Caco-2 (cell line): ENCODE measurements at regions of chr10 and their contacts with region 1.

Region 1: GRCh38 chr10:102815790-102816549 is 21.2 kb downstream of the CYP17A1 start:
- DNase-seq: no peak
- H3K4me3 ChIP-seq: no peak overlapping the region
- H3K4me3 Mint-ChIP-seq: no peak overlapping the region
- H3K27ac Mint-ChIP-seq: no peak overlapping the region
- H3K4me1 ChIP-seq: peaks cover 21% of the 10 kb centered on the region
- H3K4me1 Mint-ChIP-seq: peaks cover 7% of the 10 kb centered on the region
- H3K27me3 ChIP-seq: no peaks in the 10 kb centered on the region
- H3K27me3 Mint-ChIP-seq: no peaks in the 10 kb centered on the region
- CTCF ChIP-seq: no peak

Region 2: GRCh38 chr10:102752934-102753664 is 62.9 kb before region 1 on chr10:
- CTCF ChIA-PET with region 1: interaction called, 8 read pairs
- POLR2A ChIA-PET with region 1: no interaction called
- intact Hi-C with region 1: loop called (anchors 1 kb)
- DNase-seq: peak in 1 of 2 experiments; percentile 55
- H3K4me3 ChIP-seq: no peak overlapping the region
- H3K4me3 Mint-ChIP-seq: no peak overlapping the region
- H3K27ac Mint-ChIP-seq: no peak overlapping the region
- H3K4me1 ChIP-seq: peaks cover 17% of the 10 kb centered on the region
- H3K4me1 Mint-ChIP-seq: peaks cover 11% of the 10 kb centered on the region
- H3K27me3 ChIP-seq: no peaks in the 10 kb centered on the region
- H3K27me3 Mint-ChIP-seq: no peaks in the 10 kb centered on the region
- CTCF ChIP-seq: peak; percentile 66 to 70

Region 3: DNA sequence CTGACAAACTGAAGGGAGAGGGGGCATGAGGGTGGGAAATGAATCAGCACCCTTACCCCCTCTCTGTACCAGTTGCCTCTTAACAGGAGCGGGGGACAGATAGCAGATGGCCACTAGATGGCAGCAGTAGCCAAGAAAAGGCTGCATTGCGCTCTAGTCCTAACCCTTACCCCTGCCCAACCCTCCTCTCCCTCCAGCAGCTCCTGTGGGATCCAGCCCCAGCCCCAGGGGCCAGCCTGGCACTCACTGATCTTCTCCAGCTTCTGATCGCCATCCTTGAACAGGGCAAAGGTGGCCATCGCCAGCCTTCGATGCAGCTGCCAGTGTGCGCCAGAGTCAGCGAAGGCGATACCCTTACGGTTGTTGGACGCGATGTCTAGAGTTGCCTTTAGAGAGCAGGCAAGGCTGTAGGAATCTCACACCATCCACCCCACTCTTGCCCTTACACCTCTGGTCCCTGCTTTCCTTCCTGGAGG is 19.1 kb after region 1 on chr10:
- CTCF ChIA-PET with region 1: no interaction called
- POLR2A ChIA-PET with region 1: no interaction called
- intact Hi-C with region 1: no loop called
- DNase-seq: peak; percentile 82 to 84
- H3K4me3 ChIP-seq: no peak overlapping the region
- H3K4me3 Mint-ChIP-seq: no peak overlapping the region
- H3K27ac Mint-ChIP-seq: no peak overlapping the region
- H3K4me1 ChIP-seq: peaks cover 14% of the 10 kb centered on the region; the same call in 1 of the 2 replicates
- H3K4me1 Mint-ChIP-seq: peaks cover 16% of the 10 kb centered on the region
- H3K27me3 ChIP-seq: no peaks in the 10 kb centered on the region
- H3K27me3 Mint-ChIP-seq: no peaks in the 10 kb centered on the region
- CTCF ChIP-seq: peak; percentile 88 to 91

Region 4: DNA sequence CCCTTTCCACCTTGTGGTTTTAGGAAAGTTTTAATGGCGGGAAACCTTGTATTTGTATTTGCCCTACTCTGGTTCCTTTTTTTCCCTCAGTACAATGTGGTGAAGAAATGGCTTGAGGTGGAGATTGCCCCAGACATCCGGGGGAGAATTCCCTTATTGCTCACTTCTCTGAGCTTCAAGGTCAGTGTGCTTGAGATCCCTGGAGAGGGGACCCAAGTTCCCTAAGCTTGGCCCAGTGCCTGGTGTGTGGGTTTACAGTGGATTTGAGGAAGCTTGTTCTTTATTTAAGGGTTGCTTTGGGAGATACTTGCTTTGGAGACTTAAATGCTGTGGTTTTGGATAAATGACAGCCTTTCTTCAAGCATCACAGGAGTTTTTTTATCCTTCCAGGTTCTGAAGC is 617.9 kb after region 1 on chr10:
- CTCF ChIA-PET with region 1: no interaction called
- POLR2A ChIA-PET with region 1: no interaction called
- intact Hi-C with region 1: no loop called
- DNase-seq: no peak
- H3K4me3 ChIP-seq: no peak overlapping the region
- H3K4me3 Mint-ChIP-seq: no peak overlapping the region
- H3K27ac Mint-ChIP-seq: no peak overlapping the region
- H3K4me1 ChIP-seq: no peaks in the 10 kb centered on the region
- H3K4me1 Mint-ChIP-seq: no peaks in the 10 kb centered on the region
- H3K27me3 ChIP-seq: no peaks in the 10 kb centered on the region
- H3K27me3 Mint-ChIP-seq: no peaks in the 10 kb centered on the region
- CTCF ChIP-seq: no peak